H1 (cell line): ENCODE measurements at regions of chr10 and their contacts with region 1.

Region 1: GRCh38 chr10:110803830-110804338 is 67.8 kb upstream of the PDCD4 start:
- DNase-seq: peak; percentile 17 to 57
- H3K4me3 ChIP-seq: no peak overlapping the region
- H3K27ac ChIP-seq: no peak overlapping the region
- H3K4me1 ChIP-seq: peaks cover 0 to 2% (median 0%) of the 10 kb centered on the region in 4 experiments; a peak in 1 of 7 replicates
- H3K27me3 ChIP-seq: no peaks in the 10 kb centered on the region
- CTCF ChIP-seq: peak; percentile 69 to 80 (median 71)
- EP300 ChIP-seq: no peak
- POLR2A ChIP-seq: no peak
- RAD21 ChIP-seq: peak; percentile 81 to 84

Region 2: DNA sequence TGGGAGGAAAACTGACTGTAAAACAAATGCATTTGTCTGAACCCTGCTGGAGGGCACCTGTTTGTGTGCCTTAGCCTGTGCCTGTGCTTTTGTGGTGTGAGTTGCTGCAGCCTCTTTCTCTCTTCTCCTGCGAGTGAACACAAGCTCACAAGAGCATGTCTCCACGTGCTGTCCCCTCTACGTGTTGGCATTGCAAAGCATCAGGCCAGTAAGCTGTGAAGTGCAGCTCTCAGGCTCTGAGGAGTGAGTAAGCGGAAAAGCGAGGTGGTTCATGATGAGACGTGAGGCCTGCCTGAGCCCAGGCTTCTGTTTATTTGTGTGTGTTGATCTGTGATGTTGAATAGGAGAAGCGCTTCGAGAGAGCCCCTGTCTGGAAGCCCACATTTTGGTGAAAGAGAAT is 17.7 kb before region 1 on chr10:
- CTCF ChIA-PET with region 1: interaction called, 21 read pairs
- POLR2A ChIA-PET with region 1: no interaction called
- DNase-seq: no peak
- H3K4me3 ChIP-seq: no peak overlapping the region
- H3K27ac ChIP-seq: no peak overlapping the region
- H3K4me1 ChIP-seq: peaks cover 0 to 7% (median 3%) of the 10 kb centered on the region in 4 experiments; a peak in 3 of 7 replicates
- H3K27me3 ChIP-seq: no peaks in the 10 kb centered on the region
- CTCF ChIP-seq: no peak
- EP300 ChIP-seq: no peak
- POLR2A ChIP-seq: no peak
- RAD21 ChIP-seq: no peak

Region 3: DNA sequence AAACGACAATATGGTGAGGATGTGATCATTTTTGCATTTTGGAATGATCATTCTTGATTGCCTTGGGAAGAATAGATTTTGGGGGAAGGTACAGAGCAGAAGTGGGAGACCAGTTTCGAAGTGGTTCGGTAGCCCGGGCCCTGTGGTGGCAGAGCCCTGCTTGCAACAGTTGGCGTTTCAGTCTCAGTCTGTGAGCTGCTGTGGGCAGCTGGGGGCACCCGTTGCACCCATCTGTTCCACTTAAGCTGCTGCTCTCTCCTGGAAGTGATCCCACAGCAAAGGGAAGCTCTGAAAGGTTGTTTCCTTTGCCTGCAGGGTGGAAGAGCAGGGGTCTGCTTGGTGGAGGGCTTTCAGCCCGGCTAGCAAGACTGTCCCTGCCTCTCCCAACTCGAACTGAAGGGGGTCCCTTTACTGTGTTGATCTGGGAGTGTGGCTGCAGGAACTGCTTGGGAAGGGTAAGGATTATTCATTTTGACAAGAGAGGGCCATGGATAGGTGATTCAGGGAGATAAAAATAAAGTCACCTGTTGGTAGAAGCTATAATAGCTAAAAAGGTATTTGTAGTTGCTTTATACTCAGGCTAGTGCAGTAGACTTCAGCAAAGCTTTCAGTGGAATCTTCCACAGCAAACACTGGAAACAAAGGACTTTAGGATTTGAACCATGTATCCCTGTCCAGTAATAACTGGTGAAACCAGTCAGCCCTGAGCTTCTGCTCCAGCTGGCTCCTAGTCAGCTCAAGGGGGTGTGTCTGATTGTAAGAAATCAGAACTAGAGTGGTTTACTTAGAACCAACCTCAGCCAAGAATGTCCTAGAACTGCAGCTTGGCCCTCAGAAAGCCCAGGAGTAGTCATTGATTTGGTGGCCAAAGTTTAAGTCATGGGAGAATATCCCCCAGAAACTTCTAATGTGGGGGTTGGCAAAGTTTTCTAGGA is 14.7 kb after region 1 on chr10:
- CTCF ChIA-PET with region 1: interaction called, 17 read pairs
- POLR2A ChIA-PET with region 1: no interaction called
- DNase-seq: no peak
- H3K4me3 ChIP-seq: no peak overlapping the region
- H3K27ac ChIP-seq: no peak overlapping the region
- H3K4me1 ChIP-seq: peaks cover 4 to 16% (median 11%) of the 10 kb centered on the region in 4 experiments; a peak in 6 of 7 replicates
- H3K27me3 ChIP-seq: no peaks in the 10 kb centered on the region
- CTCF ChIP-seq: no peak
- EP300 ChIP-seq: no peak
- POLR2A ChIP-seq: no peak
- RAD21 ChIP-seq: no peak

Region 4: GRCh38 chr10:110827875-110828274 is 24.0 kb after region 1 on chr10:
- CTCF ChIA-PET with region 1: interaction called, 11 read pairs
- POLR2A ChIA-PET with region 1: interaction called, 3 read pairs
- DNase-seq: no peak
- H3K4me3 ChIP-seq: no peak overlapping the region
- H3K27ac ChIP-seq: no peak overlapping the region
- H3K4me1 ChIP-seq: peaks cover 1 to 6% (median 4%) of the 10 kb centered on the region in 4 experiments; a peak in 6 of 7 replicates
- H3K27me3 ChIP-seq: no peaks in the 10 kb centered on the region
- CTCF ChIP-seq: no peak
- EP300 ChIP-seq: no peak
- POLR2A ChIP-seq: no peak
- RAD21 ChIP-seq: no peak

Region 5: DNA sequence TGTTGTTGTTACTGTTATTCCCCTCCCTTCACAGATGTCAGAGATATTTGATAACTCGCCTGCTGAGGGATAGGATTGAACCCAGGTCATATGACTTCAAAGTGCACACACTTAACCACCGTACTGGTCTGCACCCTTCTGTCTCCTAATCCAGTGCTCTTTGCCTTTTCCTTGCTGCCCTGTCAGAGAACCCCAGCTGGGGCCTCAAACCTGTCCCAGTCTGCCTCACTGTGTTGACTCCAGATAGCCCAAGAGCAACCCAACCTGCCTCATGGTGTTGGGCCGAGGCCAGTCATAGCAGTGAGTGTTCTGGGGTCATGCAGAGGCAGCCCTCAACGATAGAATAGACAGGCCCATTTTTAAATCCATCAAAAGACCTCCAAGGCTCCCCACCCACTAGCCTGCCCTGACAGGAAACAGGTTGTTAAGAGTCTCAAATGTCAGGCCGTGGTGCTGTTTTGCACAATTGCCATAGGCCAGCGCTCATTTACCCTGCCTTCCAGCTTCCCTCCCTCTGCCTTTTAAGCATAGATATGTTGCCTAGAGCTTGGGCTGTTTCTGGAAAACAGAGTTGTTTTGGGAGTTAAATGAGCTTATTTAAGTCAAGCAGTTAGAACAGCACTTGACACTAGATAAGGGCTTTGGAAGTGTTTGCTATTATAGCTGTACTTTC is 30.9 kb after region 1 on chr10:
- CTCF ChIA-PET with region 1: interaction called, 10 read pairs
- POLR2A ChIA-PET with region 1: interaction called, 3 read pairs
- DNase-seq: no peak
- H3K4me3 ChIP-seq: no peak overlapping the region
- H3K27ac ChIP-seq: no peak overlapping the region
- H3K4me1 ChIP-seq: peaks cover 0 to 10% (median 2%) of the 10 kb centered on the region in 4 experiments; a peak in 4 of 7 replicates
- H3K27me3 ChIP-seq: no peaks in the 10 kb centered on the region
- CTCF ChIP-seq: no peak
- EP300 ChIP-seq: no peak
- POLR2A ChIP-seq: no peak
- RAD21 ChIP-seq: no peak